Dorsolateral prefrontal cortex (tissue), 120 donors: ENCODE measurements at regions of chr16 and their contacts with region 1.

Region 1: GRCh38 chr16:11263737-11264136 is 5.4 kb downstream of the TNP2 start:
- DNase-seq: no peak
- H3K4me3 ChIP-seq: no peak overlapping the region
- H3K27ac ChIP-seq: no peak overlapping the region
- H3K27me3 ChIP-seq: no peaks in the 10 kb centered on the region
- CTCF ChIP-seq: no peak

Region 2: DNA sequence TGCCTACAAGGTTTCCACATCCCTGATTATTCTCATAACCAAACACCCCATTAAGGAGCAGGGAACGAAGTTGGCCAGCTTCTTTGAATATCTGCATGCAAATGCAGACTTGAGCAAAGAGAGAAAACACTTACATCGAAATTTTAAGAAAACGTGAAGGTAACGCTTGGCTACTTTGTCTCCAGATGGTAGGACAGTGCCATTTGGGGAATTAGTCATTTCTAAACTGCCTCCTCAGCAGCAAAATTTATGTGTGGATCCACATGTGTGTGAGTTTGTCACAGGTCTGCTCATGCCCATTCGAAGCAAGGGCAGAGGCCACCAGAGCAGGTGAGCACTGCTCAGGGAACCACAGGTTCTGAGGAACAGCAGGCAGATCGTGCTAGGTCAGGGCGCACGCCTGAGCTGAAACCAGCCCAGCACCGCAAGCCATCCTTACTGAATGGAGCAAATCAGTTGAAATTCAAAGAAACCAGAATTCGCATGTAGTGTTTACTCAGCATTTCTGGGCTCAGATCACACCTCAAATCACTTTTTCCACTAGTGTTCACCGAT is 87.9 kb before region 1 on chr16:
- intact Hi-C with region 1: no loop called
- DNase-seq: no peak
- H3K4me3 ChIP-seq: no peak overlapping the region
- H3K27ac ChIP-seq: no peak overlapping the region
- H3K27me3 ChIP-seq: no peaks in the 10 kb centered on the region
- CTCF ChIP-seq: no peak

Region 3: DNA sequence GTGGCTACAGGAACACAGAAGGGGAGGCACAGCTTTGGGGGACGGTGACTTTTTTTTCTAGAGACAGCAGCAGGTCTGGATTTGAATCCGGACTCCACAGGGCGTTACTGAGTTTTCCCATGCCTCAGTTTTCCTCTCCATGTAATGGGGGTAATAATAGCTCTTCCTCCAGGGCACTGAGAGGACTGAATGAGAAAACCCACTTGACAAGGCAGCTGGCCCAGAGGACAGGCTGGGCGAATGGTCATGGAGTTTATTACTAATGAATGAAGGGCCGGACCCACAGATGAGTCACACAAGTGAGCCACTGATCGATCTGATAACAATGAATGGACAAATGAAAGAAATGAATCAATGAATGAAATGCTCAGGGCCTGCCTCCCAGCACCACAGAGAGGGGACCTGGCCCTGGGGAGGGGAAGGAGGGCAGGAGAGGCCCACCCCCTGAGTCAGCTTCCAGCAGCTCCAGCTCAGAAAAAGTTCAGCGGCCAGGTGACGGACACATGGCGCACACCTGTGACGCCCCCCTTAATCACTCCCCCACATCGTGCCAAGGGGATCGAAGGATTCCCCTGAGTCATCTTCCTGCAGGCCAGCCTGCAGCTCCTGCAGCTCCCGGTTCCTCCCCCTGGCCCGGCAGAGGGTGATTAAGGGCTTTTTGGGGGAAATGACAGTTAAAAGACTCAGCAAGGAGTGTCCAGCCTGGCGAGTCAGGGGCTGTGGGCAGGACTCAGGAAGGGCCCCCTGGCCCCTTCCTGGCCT is 62.1 kb before region 1 on chr16:
- intact Hi-C with region 1: loop called in 1 of 2 experiments (anchors 10 kb)
- DNase-seq: no peak
- H3K4me3 ChIP-seq: no peak overlapping the region
- H3K27ac ChIP-seq: no peak overlapping the region
- H3K27me3 ChIP-seq: no peaks in the 10 kb centered on the region
- CTCF ChIP-seq: no peak

Region 4: DNA sequence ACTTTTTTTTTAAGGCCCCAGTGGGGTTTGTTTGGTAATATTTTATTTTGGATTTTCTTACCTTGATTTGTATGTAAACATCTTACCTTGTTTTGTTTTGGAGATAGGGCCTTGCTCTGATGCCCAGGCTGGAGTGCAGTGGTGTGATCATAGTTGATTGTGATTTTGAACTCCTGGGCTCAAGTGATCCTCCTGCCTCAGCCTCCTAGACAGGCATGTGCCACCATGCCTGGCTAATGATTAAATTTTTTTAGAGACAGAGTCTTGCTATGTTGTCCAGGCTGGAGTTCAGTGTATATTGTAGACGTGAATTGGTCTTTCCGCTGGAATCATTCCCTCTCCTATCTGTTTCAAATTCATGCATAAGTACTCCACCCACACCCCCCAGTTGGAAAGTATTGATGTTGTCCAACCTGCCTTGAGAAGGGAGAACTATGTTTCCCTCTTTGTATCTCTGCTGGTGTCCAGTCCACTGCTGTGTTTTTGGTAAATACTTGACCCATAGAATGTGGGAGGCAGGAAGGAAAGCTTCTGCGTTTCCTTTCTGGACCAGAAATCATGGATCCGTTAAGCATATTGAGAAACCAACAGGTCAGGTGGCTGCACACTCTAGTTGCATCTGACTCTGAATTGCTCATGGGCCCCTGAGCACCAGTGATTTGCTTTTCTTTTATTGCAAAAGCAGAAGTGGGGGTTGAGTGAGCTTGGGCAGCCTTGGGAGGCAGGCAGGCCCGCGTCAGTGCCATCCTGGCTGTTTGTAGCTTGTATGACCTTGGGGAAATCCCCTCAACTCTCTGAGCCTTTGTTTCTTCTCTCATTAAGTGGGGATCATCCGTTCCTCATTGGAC is 106.6 kb after region 1 on chr16:
- intact Hi-C with region 1: no loop called
- DNase-seq: peak in 1 of 10 donors; percentile 7
- H3K4me3 ChIP-seq: no peak overlapping the region
- H3K27ac ChIP-seq: no peak overlapping the region
- H3K27me3 ChIP-seq: no peaks in the 10 kb centered on the region
- CTCF ChIP-seq: no peak

Region 5: GRCh38 chr16:11632464-11632939 is 368.8 kb after region 1 on chr16:
- intact Hi-C with region 1: no loop called
- DNase-seq: peak in 1 of 10 donors; percentile 55
- H3K4me3 ChIP-seq: no peak overlapping the region
- H3K27ac ChIP-seq: peak overlapping the region in 26 of 59 donors; percentile 3 to 73 (median 48)
- H3K27me3 ChIP-seq: no peaks in the 10 kb centered on the region
- CTCF ChIP-seq: no peak